Ascending aorta (tissue), 2 donors: ENCODE measurements at regions of chr22 and their contacts with region 1.

Region 1: GRCh38 chr22:20437613-20438426 is at the start of gene SCARF2:
- DNase-seq: peak in 1 of 2 donors; percentile 81
- H3K4me3 ChIP-seq: peak within 1 kb of the TSS; percentile 82 to 84
- H3K27ac ChIP-seq: peak within 1 kb of the TSS; percentile 89 to 94
- H3K4me1 ChIP-seq: peaks cover 3 to 9% of the 10 kb centered on the region in 2 donors
- H3K27me3 ChIP-seq: no peaks in the 10 kb centered on the region
- CTCF ChIP-seq: no peak
- total RNA-seq, gene SCARF2: 133 TPM

Region 2: GRCh38 chr22:20418211-20418788 is 19.5 kb before region 1 on chr22:
- intact Hi-C with region 1: loop called (anchors 1 kb)
- DNase-seq: peak in 1 of 2 donors; percentile 87
- H3K4me3 ChIP-seq: peak overlapping the region; percentile 38 to 62
- H3K27ac ChIP-seq: peak overlapping the region; percentile 41 to 53
- H3K4me1 ChIP-seq: peaks cover 0 to 7% of the 10 kb centered on the region in 2 donors
- H3K27me3 ChIP-seq: no peaks in the 10 kb centered on the region
- CTCF ChIP-seq: peak; percentile 76 to 89 (median 78)

Region 3: DNA sequence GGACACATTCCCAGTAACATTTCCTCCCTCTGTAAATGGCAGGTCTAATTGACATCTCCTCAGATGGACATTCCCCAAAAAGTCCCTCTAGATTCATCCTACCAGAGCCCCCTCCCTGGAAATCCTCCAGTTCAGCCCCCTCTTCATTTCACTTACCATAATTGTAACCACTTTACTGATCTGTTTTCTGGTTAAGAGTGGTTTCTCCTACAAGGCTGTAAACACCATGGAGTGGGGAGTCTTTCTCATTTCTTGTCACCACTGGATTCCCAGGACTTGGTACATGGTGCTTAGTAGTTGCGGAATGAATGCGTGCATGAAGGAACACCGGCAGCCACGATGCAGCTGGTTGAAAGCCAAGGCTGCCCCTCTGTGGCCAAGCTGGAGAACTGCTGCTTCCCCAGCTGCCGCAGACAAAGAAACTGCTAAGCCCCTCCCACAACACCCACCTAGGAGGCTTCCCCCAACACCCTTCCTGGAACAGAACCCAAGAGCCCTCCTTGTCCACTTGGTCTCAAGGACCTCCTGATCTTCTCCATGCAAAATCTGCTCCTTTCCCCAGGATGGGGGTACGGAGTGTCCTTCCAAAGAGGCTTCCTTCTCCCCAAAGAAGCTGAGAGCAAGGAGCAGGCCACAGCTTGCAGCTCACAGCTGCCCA is 18.4 kb after region 1 on chr22:
- intact Hi-C with region 1: loop called (anchors 1 kb)
- DNase-seq: peak in 1 of 2 donors; percentile 81
- H3K4me3 ChIP-seq: no peak overlapping the region
- H3K27ac ChIP-seq: no peak overlapping the region
- H3K4me1 ChIP-seq: no peaks in the 10 kb centered on the region
- H3K27me3 ChIP-seq: no peaks in the 10 kb centered on the region
- CTCF ChIP-seq: peak; percentile 90 to 92 (median 90)

Region 4: GRCh38 chr22:20495861-20496681 is 58.3 kb after region 1 on chr22:
- intact Hi-C with region 1: loop called (anchors 1 kb)
- DNase-seq: peak; percentile 57 to 94
- H3K4me3 ChIP-seq: peak overlapping the region; percentile 93 to 96
- H3K27ac ChIP-seq: peak overlapping the region; percentile 90 to 99
- H3K4me1 ChIP-seq: peaks cover 0 to 20% of the 10 kb centered on the region in 2 donors
- H3K27me3 ChIP-seq: no peaks in the 10 kb centered on the region
- CTCF ChIP-seq: peak; percentile 86 to 92 (median 88)

Region 5: DNA sequence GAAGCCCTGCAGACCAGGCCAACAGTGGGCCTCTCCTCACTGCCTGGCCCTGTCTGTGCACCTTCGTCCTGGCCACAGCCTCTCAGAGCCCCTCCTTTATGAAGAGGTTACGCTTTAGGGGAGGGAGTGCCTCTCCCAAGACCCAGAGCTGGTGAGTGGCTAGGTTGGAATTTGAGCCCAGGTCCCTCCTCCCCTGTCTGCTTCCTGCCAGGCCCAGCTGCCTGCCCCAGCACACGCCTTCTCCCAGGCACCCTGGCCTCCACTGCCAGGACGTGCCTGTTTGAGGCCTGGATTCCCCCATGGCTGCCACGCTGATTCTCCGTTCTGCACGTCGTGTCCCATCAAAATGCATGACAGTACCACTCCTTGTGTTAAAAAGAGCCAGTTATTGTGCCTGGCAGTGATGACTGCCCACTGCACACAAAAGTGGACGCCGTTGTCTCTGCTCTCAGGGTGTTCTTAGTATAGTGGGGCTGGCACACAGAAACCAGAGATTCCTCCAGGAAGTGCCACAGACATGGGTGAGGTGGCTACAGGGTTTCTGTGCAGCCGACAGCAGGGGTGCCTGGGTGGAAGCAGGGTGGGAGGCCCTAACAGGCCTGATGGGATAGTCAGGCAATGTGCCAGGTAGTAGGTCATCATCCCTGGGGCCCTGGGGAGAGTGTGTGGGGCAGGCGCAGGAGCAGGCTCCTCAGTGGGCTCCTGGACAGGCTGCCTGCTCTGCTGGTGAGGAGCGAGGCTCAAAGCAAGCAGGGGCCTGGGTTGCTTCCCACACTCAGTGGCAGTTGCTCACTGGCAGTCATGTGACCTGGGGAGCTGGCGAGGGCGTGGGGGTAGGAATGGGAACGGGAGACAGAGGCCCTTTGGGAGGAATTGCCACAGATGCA is 93.7 kb after region 1 on chr22:
- intact Hi-C with region 1: no loop called
- DNase-seq: peak; percentile 19 to 85
- H3K4me3 ChIP-seq: peak overlapping the region in 1 of 2 donors; percentile 29
- H3K27ac ChIP-seq: peak overlapping the region; percentile 86 to 94
- H3K4me1 ChIP-seq: peaks cover 29 to 44% of the 10 kb centered on the region in 2 donors
- H3K27me3 ChIP-seq: no peaks in the 10 kb centered on the region
- CTCF ChIP-seq: no peak

Region 6: GRCh38 chr22:20606041-20606783 is 168.4 kb after region 1 on chr22:
- intact Hi-C with region 1: no loop called
- DNase-seq: no peak
- H3K4me3 ChIP-seq: no peak overlapping the region
- H3K27ac ChIP-seq: no peak overlapping the region
- H3K4me1 ChIP-seq: no peaks in the 10 kb centered on the region
- H3K27me3 ChIP-seq: no peaks in the 10 kb centered on the region
- CTCF ChIP-seq: peak; percentile 15 to 39 (median 17)